ENCODE measurements at regions of chr18 and their contacts with region 1.

Region 1: DNA sequence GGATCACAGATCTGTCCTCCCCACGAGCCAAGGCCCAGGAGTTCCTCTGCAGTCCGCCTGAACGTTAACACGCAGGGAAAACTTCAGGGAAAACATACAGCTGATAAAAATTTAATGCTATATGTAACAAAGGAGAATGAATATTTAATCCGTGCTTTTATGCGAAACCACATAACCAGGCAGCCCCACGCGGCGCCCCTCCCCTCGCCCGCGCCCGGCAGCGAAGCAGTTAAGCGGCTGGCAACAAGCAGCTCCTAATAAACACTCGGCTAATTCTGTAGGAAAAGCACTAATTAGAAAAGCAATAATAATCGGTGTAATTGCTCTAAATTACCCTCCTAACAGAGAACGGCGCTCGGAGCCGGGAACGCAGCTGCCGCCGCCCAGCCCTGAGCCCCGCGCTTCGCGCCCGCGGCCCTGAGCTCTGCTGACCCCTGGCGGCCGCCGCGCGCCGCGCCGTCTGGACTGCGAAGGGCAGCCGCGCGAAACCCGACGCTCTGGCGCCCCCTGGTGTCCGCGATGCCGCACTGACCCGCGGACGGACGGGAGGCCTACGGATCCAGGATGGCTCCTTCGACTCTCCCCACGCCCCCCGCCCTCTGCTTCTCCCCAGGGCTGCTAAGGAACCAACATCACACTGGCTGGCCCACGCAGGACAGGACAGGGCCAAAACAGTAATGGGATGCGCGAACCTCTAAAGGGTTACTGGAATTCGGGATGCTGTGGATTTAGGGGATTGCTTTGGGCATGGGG is 181.4 kb downstream of the SMAD2 start:
- DNase-seq: peak; percentile 89
- H3K4me3 Mint-ChIP-seq: peak overlapping the region; percentile 53
- H3K27ac Mint-ChIP-seq: no peak overlapping the region
- H3K4me1 Mint-ChIP-seq: no peaks in the 10 kb centered on the region
- H3K27me3 Mint-ChIP-seq: peaks cover 58% of the 10 kb centered on the region
- CTCF ChIP-seq: peak; percentile 100

Region 2: DNA sequence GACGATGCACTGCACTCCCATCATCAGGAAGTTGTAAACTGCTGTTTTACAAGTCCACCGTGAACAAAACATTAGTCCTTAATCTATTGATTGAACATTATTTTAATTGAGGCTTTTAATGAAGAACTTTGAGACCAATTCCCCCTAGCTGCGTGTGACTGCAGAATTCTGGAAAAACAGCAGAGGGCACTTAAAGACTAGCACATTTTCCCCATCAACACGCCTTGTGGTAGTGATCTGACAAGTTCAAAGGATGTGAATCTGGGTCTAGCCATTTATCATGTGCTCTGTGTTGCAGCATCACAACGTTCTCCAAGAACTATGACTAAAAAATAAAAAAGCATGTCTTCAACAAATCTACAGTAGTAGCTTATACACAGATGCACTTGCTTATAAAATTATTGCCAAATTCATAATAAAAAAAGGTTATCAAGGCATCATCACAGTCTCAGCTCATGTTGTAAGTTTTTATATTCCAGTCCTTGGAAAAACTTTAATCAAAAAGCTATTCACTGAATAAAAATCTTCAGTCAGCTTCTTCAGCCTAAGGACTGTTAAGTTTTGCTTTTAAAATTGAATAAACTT is 533.4 kb before region 1 on chr18:
- CTCF ChIA-PET with region 1: interaction called, 4 read pairs
- intact Hi-C with region 1: loop called (anchors 2 kb)
- DNase-seq: peak; percentile 26
- H3K4me3 Mint-ChIP-seq: no peak overlapping the region
- H3K27ac Mint-ChIP-seq: no peak overlapping the region
- H3K4me1 Mint-ChIP-seq: no peaks in the 10 kb centered on the region
- H3K27me3 Mint-ChIP-seq: peaks cover 74% of the 10 kb centered on the region
- CTCF ChIP-seq: no peak

Region 3: DNA sequence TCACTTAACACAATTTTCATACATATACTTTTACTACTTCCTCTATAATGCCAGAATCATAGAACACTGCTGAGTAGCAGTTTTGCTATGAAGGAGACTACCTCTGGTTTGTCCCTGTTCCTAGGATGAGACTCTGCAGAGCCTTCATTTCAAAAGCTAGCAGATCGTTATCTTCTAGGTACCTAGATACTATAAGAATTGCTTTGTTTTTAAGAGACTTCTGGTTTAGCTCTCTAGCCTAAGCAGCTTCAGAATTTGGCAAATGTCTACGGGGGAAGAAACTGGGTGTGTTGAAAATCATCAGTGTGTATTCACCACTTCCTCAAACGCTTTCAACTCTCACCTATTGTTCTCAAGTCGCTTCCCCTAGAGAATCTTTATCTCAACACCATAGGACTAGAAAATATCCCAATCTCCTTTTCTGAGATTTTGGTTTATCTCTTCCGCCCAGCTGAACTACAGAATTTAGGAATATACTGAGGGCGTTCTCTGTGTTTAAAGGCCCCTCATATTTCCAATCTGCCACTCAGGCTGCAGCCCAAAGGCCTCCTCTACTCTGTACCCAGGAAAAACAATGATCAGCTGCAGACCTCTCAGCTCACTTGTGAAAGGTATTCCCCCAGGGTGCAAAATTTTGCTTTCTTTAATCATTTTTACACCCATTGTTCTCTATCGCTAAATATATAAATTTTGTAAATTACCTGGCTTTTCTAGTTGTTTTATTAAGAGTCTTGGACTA is 152.8 kb after region 1 on chr18:
- CTCF ChIA-PET with region 1: no interaction called
- intact Hi-C with region 1: no loop called
- DNase-seq: no peak
- H3K4me3 Mint-ChIP-seq: no peak overlapping the region
- H3K27ac Mint-ChIP-seq: no peak overlapping the region
- H3K4me1 Mint-ChIP-seq: peaks cover 48% of the 10 kb centered on the region
- H3K27me3 Mint-ChIP-seq: no peaks in the 10 kb centered on the region
- CTCF ChIP-seq: no peak